ENCODE measurements at regions of chr12 and their contacts with region 1.

Region 1: GRCh38 chr12:8226355-8226754 is 1.1 kb downstream of the FAM90A1 start:
- DNase-seq: peak in 1 of 6 donors; percentile 7
- ATAC-seq: no peak
- H3K4me3 ChIP-seq: no peak overlapping the region
- H3K27ac ChIP-seq: no peak overlapping the region
- H3K4me1 ChIP-seq: no peaks in the 10 kb centered on the region
- H3K27me3 ChIP-seq: no peaks in the 10 kb centered on the region
- CTCF ChIP-seq: no peak

Region 2: DNA sequence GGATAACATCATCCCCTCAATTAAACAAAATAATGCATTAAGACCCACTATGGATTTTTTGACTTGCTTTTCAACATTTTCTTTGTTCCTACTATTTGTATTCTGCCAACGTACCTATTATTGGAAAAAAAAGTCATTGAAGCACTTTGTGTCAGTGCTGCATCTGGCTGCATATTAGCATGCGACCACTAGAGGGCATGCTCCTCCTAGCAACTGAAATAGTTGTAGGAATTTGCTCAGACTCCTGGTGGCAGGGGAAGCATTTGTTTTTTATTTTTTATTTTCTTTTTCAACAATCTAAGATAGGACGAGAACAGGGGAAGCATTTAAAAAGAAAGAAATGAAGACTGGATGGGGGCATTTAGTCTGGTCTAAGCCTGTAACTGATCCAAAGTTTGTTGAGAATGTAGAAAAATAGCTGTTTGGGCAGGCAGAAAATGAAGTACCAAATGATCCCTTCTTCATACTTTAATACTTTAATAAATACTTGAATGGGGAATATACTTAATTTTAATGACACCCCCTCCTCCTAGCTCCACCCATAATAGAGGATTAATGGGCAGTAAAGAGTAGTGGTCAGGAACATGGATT is 117.5 kb before region 1 on chr12:
- intact Hi-C with region 1: loop called in 2 of 3 experiments (anchors 5 to 10 kb)
- DNase-seq: peak in 5 of 6 donors; percentile 55 to 88 (median 79)
- ATAC-seq: peak; percentile 66 to 98 (median 90)
- H3K4me3 ChIP-seq: no peak overlapping the region
- H3K27ac ChIP-seq: no peak overlapping the region
- H3K4me1 ChIP-seq: no peaks in the 10 kb centered on the region
- H3K27me3 ChIP-seq: no peaks in the 10 kb centered on the region
- CTCF ChIP-seq: peak; percentile 91 to 97 (median 92)